ENCODE measurements at regions of chr9 and their contacts with region 1.

Region 1: GRCh38 chr9:98998441-98999151 is 54.9 kb downstream of the COL15A1 start:
- DNase-seq: peak; percentile 69
- H3K4me3 Mint-ChIP-seq: no peak overlapping the region
- H3K27ac Mint-ChIP-seq: no peak overlapping the region
- H3K4me1 Mint-ChIP-seq: peaks cover 10% of the 10 kb centered on the region
- H3K27me3 Mint-ChIP-seq: peaks cover 33% of the 10 kb centered on the region
- CTCF ChIP-seq: peak; percentile 84

Region 2: GRCh38 chr9:98807070-98807810 is 191.4 kb before region 1 on chr9 and contains the start of gene GALNT12:
- CTCF ChIA-PET with region 1: interaction called, 11 read pairs
- POLR2A ChIA-PET with region 1: no interaction called
- intact Hi-C with region 1: no loop called
- DNase-seq: no peak
- H3K4me3 Mint-ChIP-seq: peak within 1 kb of the TSS; percentile 14
- H3K27ac Mint-ChIP-seq: no peak within 1 kb of the TSS
- H3K4me1 Mint-ChIP-seq: peaks cover 39% of the 10 kb centered on the region
- H3K27me3 Mint-ChIP-seq: peaks cover 39% of the 10 kb centered on the region
- CTCF ChIP-seq: no peak
- total RNA-seq, gene GALNT12: not detected in 2 replicates

Region 3: DNA sequence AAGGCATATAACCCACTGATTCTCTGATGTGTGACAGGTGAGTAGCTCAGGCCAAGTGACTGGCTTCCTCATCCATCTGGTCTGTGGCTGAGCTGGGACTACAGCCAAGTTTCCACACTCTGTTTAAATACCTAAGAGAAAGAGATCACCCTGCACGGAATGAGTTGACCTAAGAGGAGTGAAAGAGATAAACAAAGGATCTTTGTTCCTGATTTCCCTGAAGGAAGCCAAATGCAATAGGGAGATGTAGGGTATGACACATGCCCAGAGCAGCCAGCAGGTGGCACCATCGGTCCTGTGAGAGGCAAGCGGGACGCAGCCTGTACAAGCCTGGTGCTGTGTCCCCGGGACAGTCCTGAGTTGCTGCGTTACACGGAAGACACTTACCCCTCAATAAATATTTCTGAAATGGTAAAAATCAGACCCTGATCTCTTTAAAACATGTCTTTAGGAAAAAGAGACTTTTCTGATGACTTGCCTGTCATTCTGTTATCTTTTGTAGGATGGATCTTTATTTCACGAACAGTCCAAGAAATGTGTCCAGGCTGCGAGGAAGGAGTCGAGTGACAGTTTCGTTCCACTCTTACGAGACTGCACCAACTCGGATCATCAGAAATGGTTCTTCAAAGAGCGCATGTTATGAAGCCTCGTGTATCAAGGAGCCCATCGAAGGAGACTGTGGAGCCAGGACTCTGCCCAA is 150.0 kb before region 1 on chr9:
- CTCF ChIA-PET with region 1: interaction called, 226 read pairs
- POLR2A ChIA-PET with region 1: interaction called, 3 read pairs
- intact Hi-C with region 1: loop called (anchors 1 kb)
- DNase-seq: peak; percentile 80
- H3K4me3 Mint-ChIP-seq: no peak overlapping the region
- H3K27ac Mint-ChIP-seq: no peak overlapping the region
- H3K4me1 Mint-ChIP-seq: peaks cover 10% of the 10 kb centered on the region
- H3K27me3 Mint-ChIP-seq: peaks cover 32% of the 10 kb centered on the region
- CTCF ChIP-seq: peak; percentile 87

Region 4: GRCh38 chr9:98949564-98949963 is 49.0 kb before region 1 on chr9:
- CTCF ChIA-PET with region 1: no interaction called
- POLR2A ChIA-PET with region 1: no interaction called
- intact Hi-C with region 1: no loop called
- DNase-seq: no peak
- H3K4me3 Mint-ChIP-seq: no peak overlapping the region
- H3K27ac Mint-ChIP-seq: no peak overlapping the region
- H3K4me1 Mint-ChIP-seq: no peaks in the 10 kb centered on the region
- H3K27me3 Mint-ChIP-seq: no peaks in the 10 kb centered on the region
- CTCF ChIP-seq: no peak

Region 5: GRCh38 chr9:98964911-98965336 is 33.7 kb before region 1 on chr9:
- CTCF ChIA-PET with region 1: interaction called, 11 read pairs
- POLR2A ChIA-PET with region 1: no interaction called
- intact Hi-C with region 1: no loop called
- DNase-seq: no peak
- H3K4me3 Mint-ChIP-seq: no peak overlapping the region
- H3K27ac Mint-ChIP-seq: no peak overlapping the region
- H3K4me1 Mint-ChIP-seq: no peaks in the 10 kb centered on the region
- H3K27me3 Mint-ChIP-seq: peaks cover 31% of the 10 kb centered on the region
- CTCF ChIP-seq: no peak

Region 6: GRCh38 chr9:99012942-99013512 is 14.4 kb after region 1 on chr9:
- CTCF ChIA-PET with region 1: interaction called, 23 read pairs
- POLR2A ChIA-PET with region 1: interaction called, 4 read pairs
- intact Hi-C with region 1: no loop called
- DNase-seq: no peak
- H3K4me3 Mint-ChIP-seq: no peak overlapping the region
- H3K27ac Mint-ChIP-seq: no peak overlapping the region
- H3K4me1 Mint-ChIP-seq: no peaks in the 10 kb centered on the region
- H3K27me3 Mint-ChIP-seq: no peaks in the 10 kb centered on the region
- CTCF ChIP-seq: no peak

Region 7: GRCh38 chr9:99130069-99130468 is 131.5 kb after region 1 on chr9:
- CTCF ChIA-PET with region 1: interaction called, 225 read pairs
- POLR2A ChIA-PET with region 1: no interaction called
- intact Hi-C with region 1: no loop called
- DNase-seq: no peak
- H3K4me3 Mint-ChIP-seq: no peak overlapping the region
- H3K27ac Mint-ChIP-seq: no peak overlapping the region
- H3K4me1 Mint-ChIP-seq: peaks cover 16% of the 10 kb centered on the region
- H3K27me3 Mint-ChIP-seq: no peaks in the 10 kb centered on the region
- CTCF ChIP-seq: no peak

Region 8: DNA sequence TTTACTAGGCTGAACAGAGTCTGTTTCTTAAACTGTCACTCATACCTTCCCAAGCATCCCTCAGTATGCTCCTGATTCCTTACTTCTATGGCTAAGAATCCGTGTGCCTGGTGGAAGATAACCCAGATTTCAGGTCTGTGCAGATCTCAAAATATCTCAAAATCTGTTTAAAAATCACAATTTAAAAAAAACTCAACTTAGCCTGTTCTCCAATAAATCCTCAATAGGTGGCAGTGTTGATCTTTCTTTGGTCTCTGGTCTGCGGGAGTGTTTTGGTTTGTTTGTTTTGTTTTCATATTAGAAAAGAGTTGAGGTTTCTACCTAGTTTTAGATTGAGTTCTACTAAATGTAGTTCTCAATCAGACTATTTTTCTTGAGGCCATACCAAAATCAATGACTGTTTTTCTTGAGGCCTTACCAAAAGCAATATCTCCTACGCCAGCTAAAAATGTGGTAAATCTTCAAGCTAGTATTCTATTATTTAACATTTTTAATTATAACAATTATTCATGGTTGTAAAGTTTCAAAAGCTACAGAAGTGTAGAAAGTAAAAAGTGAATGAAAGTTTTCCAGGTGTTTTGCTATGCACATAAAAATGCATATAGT is 164.3 kb after region 1 on chr9:
- CTCF ChIA-PET with region 1: interaction called, 4 read pairs
- POLR2A ChIA-PET with region 1: no interaction called
- intact Hi-C with region 1: loop called (anchors 1 kb)
- DNase-seq: peak; percentile 48
- H3K4me3 Mint-ChIP-seq: no peak overlapping the region
- H3K27ac Mint-ChIP-seq: no peak overlapping the region
- H3K4me1 Mint-ChIP-seq: no peaks in the 10 kb centered on the region
- H3K27me3 Mint-ChIP-seq: peaks cover 13% of the 10 kb centered on the region
- CTCF ChIP-seq: peak; percentile 51

Region 9: GRCh38 chr9:99269416-99269815 is 270.8 kb after region 1 on chr9:
- CTCF ChIA-PET with region 1: no interaction called
- POLR2A ChIA-PET with region 1: no interaction called
- intact Hi-C with region 1: no loop called
- DNase-seq: peak; percentile 38
- H3K4me3 Mint-ChIP-seq: no peak overlapping the region
- H3K27ac Mint-ChIP-seq: no peak overlapping the region
- H3K4me1 Mint-ChIP-seq: peaks cover 19% of the 10 kb centered on the region
- H3K27me3 Mint-ChIP-seq: peaks cover 20% of the 10 kb centered on the region
- CTCF ChIP-seq: no peak

Measured in MCF 10A (cell line).